ENCODE measurements at regions of chr5 and their contacts with region 1.

Region 1: GRCh38 chr5:112921833-112922817 is at the start of gene REEP5:
- DNase-seq: peak; percentile 85
- H3K4me3 Mint-ChIP-seq: peak within 1 kb of the TSS; percentile 95
- H3K27ac Mint-ChIP-seq: peak within 1 kb of the TSS; percentile 93
- H3K4me1 Mint-ChIP-seq: peaks cover 62% of the 10 kb centered on the region
- H3K27me3 Mint-ChIP-seq: no peaks in the 10 kb centered on the region
- total RNA-seq, gene REEP5: 77.5 and 77.9 TPM in 2 replicates

Region 2: GRCh38 chr5:111706345-111706744 is 1215.8 kb before region 1 on chr5:
- intact Hi-C with region 1: no loop called
- DNase-seq: no peak
- H3K4me3 Mint-ChIP-seq: no peak overlapping the region
- H3K27ac Mint-ChIP-seq: no peak overlapping the region
- H3K4me1 Mint-ChIP-seq: peaks cover 23% of the 10 kb centered on the region
- H3K27me3 Mint-ChIP-seq: peaks cover 2% of the 10 kb centered on the region

Region 3: GRCh38 chr5:112860929-112861637 is 61.0 kb before region 1 on chr5 and contains the start of gene SRP19:
- intact Hi-C with region 1: loop called (anchors 1 kb)
- DNase-seq: peak; percentile 89
- H3K4me3 Mint-ChIP-seq: peak within 1 kb of the TSS; percentile 97
- H3K27ac Mint-ChIP-seq: peak within 1 kb of the TSS; percentile 96
- H3K4me1 Mint-ChIP-seq: peaks cover 27% of the 10 kb centered on the region
- H3K27me3 Mint-ChIP-seq: peaks cover 12% of the 10 kb centered on the region
- total RNA-seq, gene SRP19: 72.0 and 72.5 TPM in 2 replicates

Region 4: GRCh38 chr5:112895682-112896081 is 26.4 kb before region 1 on chr5:
- intact Hi-C with region 1: loop called (anchors 2 kb)
- DNase-seq: no peak
- H3K4me3 Mint-ChIP-seq: no peak overlapping the region
- H3K27ac Mint-ChIP-seq: no peak overlapping the region
- H3K4me1 Mint-ChIP-seq: peaks cover 21% of the 10 kb centered on the region
- H3K27me3 Mint-ChIP-seq: no peaks in the 10 kb centered on the region

Region 5: DNA sequence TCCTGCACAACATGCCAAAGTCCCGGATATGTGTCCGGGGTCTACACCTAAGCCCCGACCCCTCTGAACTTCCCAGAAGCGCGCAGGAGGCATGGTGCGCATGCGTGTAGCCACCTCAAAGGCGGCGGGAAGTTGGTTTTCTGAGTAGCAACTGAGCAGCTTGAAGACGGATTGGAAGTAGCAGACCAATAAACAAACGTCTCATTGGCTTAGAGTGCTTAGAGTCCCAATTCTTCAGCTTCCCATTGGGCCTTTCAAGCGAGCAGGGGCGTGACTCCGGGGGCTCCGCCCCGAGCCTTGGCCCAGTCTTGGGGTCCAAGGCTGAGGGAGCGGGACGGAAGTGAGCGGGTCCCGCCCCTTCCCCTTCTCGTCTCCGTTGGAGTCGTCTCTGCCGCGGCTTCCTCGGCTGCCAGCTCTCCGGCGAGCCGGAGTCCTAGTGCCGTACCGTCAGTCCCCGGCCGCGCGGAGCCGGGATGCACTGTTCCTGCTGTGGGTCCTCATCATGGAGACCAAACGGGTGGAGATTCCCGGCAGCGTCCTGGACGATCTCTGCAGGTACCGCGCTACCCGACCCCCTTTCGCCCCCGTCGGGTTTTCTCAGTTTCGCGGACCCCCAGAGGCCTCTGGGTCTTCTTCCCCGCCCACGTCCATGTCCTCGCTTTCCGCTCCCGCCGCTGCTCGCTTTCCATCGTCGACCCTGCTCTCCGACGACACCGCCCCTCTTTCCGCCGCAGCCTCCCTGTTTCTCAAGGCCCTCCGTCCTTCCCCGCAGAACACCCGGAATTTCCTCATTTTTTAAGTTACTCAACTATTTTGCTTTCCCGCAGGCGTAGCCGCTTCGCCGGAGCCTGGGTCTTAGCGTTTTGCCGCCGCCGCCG is 54.5 kb after region 1 on chr5 and contains the start of gene DCP2:
- intact Hi-C with region 1: loop called (anchors 1 kb)
- DNase-seq: peak; percentile 96
- H3K4me3 Mint-ChIP-seq: peak within 1 kb of the TSS; percentile 93
- H3K27ac Mint-ChIP-seq: peak within 1 kb of the TSS; percentile 93
- H3K4me1 Mint-ChIP-seq: peaks cover 32% of the 10 kb centered on the region
- H3K27me3 Mint-ChIP-seq: no peaks in the 10 kb centered on the region
- total RNA-seq, gene DCP2: 78.9 and 82.5 TPM in 2 replicates

Region 6: GRCh38 chr5:113513384-113514288 is 591.5 kb after region 1 on chr5 and contains the start of gene YTHDC2:
- intact Hi-C with region 1: loop called (anchors 1 kb)
- DNase-seq: peak; percentile 82
- H3K4me3 Mint-ChIP-seq: peak within 1 kb of the TSS; percentile 94
- H3K27ac Mint-ChIP-seq: peak within 1 kb of the TSS; percentile 87
- H3K4me1 Mint-ChIP-seq: peaks cover 35% of the 10 kb centered on the region
- H3K27me3 Mint-ChIP-seq: peaks cover 9% of the 10 kb centered on the region
- total RNA-seq, gene YTHDC2: 26.0 and 27.5 TPM in 2 replicates

Measured in activated T-helper 1 cell treated with anti-CD3 and anti-CD28 coated beads, Interleukin-12 subunit alpha, Interleukin-12 subunit beta, Interleukin-2, Interleukin-4 antibody, amounts not matched to agents 30 ng/mL and 10 ng/mL and 1 ng/mL, durations not matched to agents 14 hours and 24 hours and 36 hours (primary cell).